Cardiac septum (tissue), 1 donor: ENCODE measurements at regions of chr16 and their contacts with region 1.

Region 1: DNA sequence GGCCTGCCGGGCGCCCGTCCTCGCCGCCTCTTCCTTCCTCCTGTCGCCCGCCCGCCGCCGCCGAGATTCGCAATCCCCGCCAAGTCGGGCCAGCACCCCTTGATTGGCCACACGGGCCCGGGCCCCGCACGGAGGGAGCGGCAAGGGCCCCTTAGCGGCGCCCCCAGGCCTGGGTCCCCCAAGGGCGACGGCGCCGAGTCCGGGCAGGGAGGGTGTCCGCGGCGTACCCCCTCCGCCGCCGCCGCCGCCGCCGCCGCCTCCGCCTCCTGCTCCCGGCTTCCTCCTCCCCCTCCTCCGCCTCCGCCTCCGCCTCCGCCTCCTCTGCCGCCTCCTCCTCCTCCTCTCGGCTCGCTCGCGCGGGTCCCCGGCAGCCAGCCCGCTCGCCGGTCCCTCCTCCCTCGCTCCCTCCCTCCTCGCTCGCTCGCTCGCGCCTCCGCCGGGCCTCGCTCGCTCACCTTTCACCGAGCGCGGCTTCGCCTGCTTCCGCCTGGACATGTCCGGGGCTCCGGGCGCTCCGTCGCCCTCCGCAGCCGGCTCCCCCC is 561 bp downstream of the ZNF423 start:
- DNase-seq: peak; percentile 89

Region 2: GRCh38 chr16:49491771-49492761 is 363.3 kb before region 1 on chr16:
- intact Hi-C with region 1: loop called (anchors 5 kb)
- DNase-seq: peak; percentile 77

Region 3: GRCh38 chr16:49608779-49609178 is 246.6 kb before region 1 on chr16:
- intact Hi-C with region 1: loop called (anchors 5 kb)
- DNase-seq: peak; percentile 43

Region 4: GRCh38 chr16:49698931-49699840 is 156.2 kb before region 1 on chr16:
- intact Hi-C with region 1: loop called (anchors 5 kb)
- DNase-seq: no peak

Region 5: GRCh38 chr16:49834531-49835151 is 20.7 kb before region 1 on chr16:
- intact Hi-C with region 1: loop called (anchors 2 kb)
- DNase-seq: no peak

Region 6: GRCh38 chr16:49947907-49948650 is 92.7 kb after region 1 on chr16:
- intact Hi-C with region 1: no loop called
- DNase-seq: no peak